Endothelial cell of umbilical vein (primary cell): ENCODE measurements at regions of chr13 and their contacts with region 1.

Region 1: GRCh38 chr13:101452519-101453485 is at the start of gene ITGBL1:
- DNase-seq: peak; percentile 48
- H3K4me3 ChIP-seq: peak within 1 kb of the TSS in 2 of 3 experiments; percentile 24 to 37
- H3K27ac ChIP-seq: peak within 1 kb of the TSS; percentile 94
- H3K4me1 ChIP-seq: peaks cover 68% of the 10 kb centered on the region
- H3K27me3 ChIP-seq: no peaks in the 10 kb centered on the region
- CTCF ChIP-seq: no peak
- POLR2A ChIP-seq: no peak
- total RNA-seq, gene ITGBL1: 8.8 and 9.9 TPM in 2 replicates

Region 2: GRCh38 chr13:101211261-101211660 is 241.5 kb before region 1 on chr13:
- CTCF ChIA-PET with region 1: interaction called, 3 read pairs
- POLR2A ChIA-PET with region 1: no interaction called
- dilution Hi-C with region 1: no loop called
- intact Hi-C with region 1: loop called (anchors 1 kb)
- DNase-seq: peak; percentile 72
- H3K4me3 ChIP-seq: no peak overlapping the region
- H3K27ac ChIP-seq: peak overlapping the region; percentile 62
- H3K4me1 ChIP-seq: peaks cover 31% of the 10 kb centered on the region
- H3K27me3 ChIP-seq: no peaks in the 10 kb centered on the region
- CTCF ChIP-seq: no peak
- POLR2A ChIP-seq: no peak

Region 3: DNA sequence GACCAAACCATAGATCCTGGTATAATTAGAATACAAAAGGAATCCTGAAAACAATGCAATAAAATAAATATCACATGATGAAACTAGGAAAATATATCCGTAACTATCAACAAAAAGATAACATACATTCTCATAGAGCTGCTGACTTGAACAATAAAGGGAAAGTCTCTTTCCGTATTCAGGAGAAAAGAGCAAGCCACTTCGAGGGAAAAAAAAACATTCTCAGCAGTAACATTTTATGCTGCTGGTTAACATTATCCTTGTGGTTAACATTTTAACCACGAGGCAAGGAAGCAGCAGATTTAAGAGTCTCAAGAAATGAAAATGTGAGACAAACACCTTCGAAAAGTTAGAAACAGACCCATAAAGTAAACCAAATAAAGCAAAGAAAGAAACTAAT is 62.3 kb before region 1 on chr13:
- CTCF ChIA-PET with region 1: no interaction called
- POLR2A ChIA-PET with region 1: no interaction called
- dilution Hi-C with region 1: no loop called
- intact Hi-C with region 1: loop called (anchors 1 kb)
- DNase-seq: peak; percentile 81
- H3K4me3 ChIP-seq: peak overlapping the region in 1 of 3 experiments; percentile 1
- H3K27ac ChIP-seq: peak overlapping the region; percentile 68
- H3K4me1 ChIP-seq: peaks cover 10% of the 10 kb centered on the region
- H3K27me3 ChIP-seq: no peaks in the 10 kb centered on the region
- CTCF ChIP-seq: no peak
- POLR2A ChIP-seq: no peak

Region 4: DNA sequence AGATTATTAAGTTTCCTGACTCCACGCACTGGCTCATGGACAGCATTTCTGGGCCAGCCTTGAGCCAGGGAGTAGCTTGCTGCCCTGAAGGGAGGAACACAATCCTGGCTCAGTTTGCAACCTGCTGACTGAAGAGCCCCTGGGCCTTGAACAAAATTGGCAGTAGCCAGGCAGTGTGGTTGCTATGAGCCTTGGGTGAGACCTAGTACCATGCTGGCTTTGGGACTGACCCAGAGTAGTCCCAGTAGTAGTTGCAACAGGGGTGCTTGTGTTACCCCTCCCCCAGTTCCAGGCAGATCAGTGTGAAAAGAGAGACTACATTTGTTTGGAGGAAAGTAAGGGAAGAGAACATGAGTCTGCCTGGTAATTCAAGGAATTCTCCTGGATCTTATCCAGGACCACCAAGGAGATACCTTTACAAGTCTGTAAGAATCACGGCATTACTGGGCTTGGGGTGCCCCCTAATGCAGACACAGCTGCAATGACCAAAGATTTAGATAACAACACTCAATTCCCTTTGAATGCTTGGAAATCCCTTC is 21.7 kb after region 1 on chr13:
- CTCF ChIA-PET with region 1: interaction called, 6 read pairs
- POLR2A ChIA-PET with region 1: interaction called, 3 read pairs
- dilution Hi-C with region 1: no loop called
- intact Hi-C with region 1: loop called (anchors 2 kb)
- DNase-seq: peak; percentile 80
- H3K4me3 ChIP-seq: no peak overlapping the region
- H3K27ac ChIP-seq: no peak overlapping the region
- H3K4me1 ChIP-seq: peaks cover 9% of the 10 kb centered on the region
- H3K27me3 ChIP-seq: no peaks in the 10 kb centered on the region
- CTCF ChIP-seq: peak; percentile 40 to 44
- POLR2A ChIP-seq: no peak

Region 5: DNA sequence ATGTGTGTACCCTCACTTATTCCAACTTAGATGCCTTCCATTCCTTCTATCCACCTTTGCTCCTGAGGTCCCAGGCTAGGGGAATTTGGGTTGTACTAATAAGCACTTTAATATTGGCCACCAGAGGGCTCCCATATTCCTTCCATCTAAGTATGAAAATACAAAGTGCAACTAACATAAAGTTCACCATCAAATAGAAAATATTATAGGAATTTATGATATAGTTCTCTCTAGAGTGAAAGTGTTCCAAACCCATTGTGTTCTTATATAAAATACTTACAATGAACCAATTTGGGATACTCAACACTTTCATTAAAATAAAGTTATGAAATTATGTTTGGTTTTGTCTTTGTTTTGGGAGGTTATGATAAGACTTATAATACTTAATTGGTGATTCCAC is 62.0 kb after region 1 on chr13:
- CTCF ChIA-PET with region 1: no interaction called
- POLR2A ChIA-PET with region 1: no interaction called
- dilution Hi-C with region 1: no loop called
- intact Hi-C with region 1: loop called (anchors 2 kb)
- DNase-seq: peak; percentile 80
- H3K4me3 ChIP-seq: no peak overlapping the region
- H3K27ac ChIP-seq: no peak overlapping the region
- H3K4me1 ChIP-seq: peaks cover 37% of the 10 kb centered on the region
- H3K27me3 ChIP-seq: no peaks in the 10 kb centered on the region
- CTCF ChIP-seq: peak; percentile 41 to 44
- POLR2A ChIP-seq: no peak